ENCODE measurements at regions of chr2 and their contacts with region 1.

Region 1: GRCh38 chr2:176554101-176555048 is 285.1 kb downstream of the MTX2 start:
- H3K4me3 ChIP-seq: peak overlapping the region; percentile 17
- H3K27ac ChIP-seq: peak overlapping the region; percentile 92
- H3K4me1 ChIP-seq: peaks cover 7% of the 10 kb centered on the region; the same call in 1 of the 2 replicates
- CTCF ChIP-seq: peak; percentile 90

Region 2: DNA sequence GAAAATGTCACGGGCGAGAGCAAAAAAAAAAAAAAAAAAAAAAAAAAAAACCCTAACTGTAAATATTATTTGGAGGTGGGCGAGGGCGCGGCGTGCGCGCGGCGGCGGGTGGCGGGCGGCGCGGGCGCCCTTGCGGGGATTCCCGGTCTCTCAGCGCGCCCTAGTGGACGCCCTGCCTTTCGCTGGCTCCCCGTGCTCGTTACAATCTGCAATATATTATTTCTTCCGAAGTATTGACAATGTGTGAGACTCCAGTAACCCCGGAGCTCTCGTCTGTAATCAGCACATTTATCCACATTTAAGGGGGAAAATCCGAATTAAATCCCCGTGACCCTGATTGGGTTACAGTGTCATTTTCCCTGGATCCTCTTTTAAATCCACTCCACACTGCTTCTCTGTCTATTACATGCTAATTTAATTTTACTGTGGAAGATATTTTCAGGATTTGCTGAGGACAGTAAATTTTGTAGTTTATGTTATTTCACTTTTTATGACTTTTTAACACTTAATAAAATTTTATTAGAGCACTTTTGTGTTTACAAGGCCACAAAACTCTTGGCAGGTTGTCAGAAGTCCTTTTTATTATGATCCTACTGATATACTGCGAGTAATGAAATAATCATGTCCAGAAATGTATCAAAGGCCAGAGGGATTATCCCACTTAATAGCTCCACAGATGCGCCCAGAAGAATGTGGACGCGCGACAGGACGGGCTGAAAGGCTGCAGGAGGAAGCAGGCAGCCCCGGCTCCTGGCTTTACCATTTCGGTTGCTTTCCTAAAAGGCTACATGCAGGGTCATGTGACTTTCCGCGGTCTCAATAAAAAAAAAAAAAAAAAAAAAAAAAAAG is 84.0 kb after region 1 on chr2:
- CTCF ChIA-PET with region 1: interaction called, 13 read pairs
- POLR2A ChIA-PET with region 1: interaction called, 6 read pairs
- H3K4me3 ChIP-seq: peak overlapping the region; percentile 69
- H3K27ac ChIP-seq: peak overlapping the region; percentile 94
- H3K4me1 ChIP-seq: 0 out of 2 replicates have a peak, but pooled peaks cover 2% of the 10 kb centered on the region
- CTCF ChIP-seq: no peak